Activated CD4-positive, alpha-beta T cell treated with anti-CD3 and anti-CD28 coated beads for 36 hours (primary cell): ENCODE measurements at regions of chrX and their contacts with region 1.

Region 1: DNA sequence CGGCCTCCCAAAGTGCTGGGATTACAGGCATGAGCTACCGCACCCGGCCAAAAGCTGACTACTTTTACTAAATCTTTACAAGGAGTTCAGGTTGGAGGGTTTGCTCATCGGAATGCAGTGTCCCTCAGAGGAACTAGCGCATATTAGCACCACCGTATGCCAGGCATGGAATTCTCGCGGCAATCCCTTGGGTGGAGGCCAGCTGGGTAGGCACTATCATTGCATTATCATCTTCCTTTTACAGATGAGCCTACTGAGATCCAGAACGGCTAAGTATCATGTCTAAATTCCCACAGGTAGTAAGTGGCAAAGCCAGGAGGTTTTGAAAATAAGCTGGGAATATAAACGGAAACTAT is 6.1 kb upstream of the CXorf66 start:
- DNase-seq: no peak
- ATAC-seq: no peak
- H3K4me3 Mint-ChIP-seq: no peak overlapping the region
- H3K27ac Mint-ChIP-seq: no peak overlapping the region
- H3K4me1 Mint-ChIP-seq: no peaks in the 10 kb centered on the region
- H3K27me3 Mint-ChIP-seq: peaks cover 5% of the 10 kb centered on the region

Region 2: DNA sequence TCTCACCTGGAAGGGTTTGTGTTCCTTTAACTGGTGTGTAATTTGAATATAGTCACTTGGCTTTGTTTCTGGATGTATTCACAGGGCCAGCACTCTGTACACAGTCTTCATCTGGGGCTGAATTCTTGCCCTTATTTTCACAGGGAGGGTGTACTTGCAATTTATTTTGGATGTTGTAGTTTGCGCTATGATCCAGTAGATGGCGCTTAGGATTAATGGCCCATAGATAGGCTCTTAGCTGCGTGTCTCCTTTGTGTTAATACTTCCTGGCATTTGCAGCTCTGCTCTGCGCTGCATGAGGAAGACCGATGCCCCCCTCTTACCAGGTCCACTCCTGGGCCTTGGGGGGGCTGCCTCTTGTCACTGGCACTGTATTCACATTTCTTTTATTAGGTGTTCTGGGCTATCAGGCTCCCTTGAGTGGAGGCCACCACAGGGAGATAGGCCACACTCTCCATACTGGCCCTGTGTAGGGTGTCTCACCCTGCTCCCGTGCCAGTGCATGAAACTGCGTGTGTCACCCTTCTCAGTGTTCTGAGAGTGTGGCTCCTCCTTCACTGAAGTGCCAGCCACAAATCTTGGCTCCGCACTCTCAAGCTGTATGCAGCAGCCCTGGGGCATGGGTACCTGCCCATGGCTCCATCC is 1843.2 kb before region 1 on chrX:
- CTCF ChIA-PET with region 1: no interaction called
- POLR2A ChIA-PET with region 1: no interaction called
- intact Hi-C with region 1: loop called in 1 of 2 experiments (anchors 10 kb)
- DNase-seq: peak; percentile 7
- ATAC-seq: no peak
- H3K4me3 Mint-ChIP-seq: no peak overlapping the region
- H3K27ac Mint-ChIP-seq: no peak overlapping the region
- H3K4me1 Mint-ChIP-seq: no peaks in the 10 kb centered on the region
- H3K27me3 Mint-ChIP-seq: no peaks in the 10 kb centered on the region

Region 3: GRCh38 chrX:138775517-138775916 is 1195.9 kb before region 1 on chrX:
- CTCF ChIA-PET with region 1: no interaction called
- POLR2A ChIA-PET with region 1: no interaction called
- intact Hi-C with region 1: loop called in 1 of 2 experiments (anchors 5 kb)
- DNase-seq: no peak
- ATAC-seq: no peak
- H3K4me3 Mint-ChIP-seq: no peak overlapping the region
- H3K27ac Mint-ChIP-seq: no peak overlapping the region
- H3K4me1 Mint-ChIP-seq: no peaks in the 10 kb centered on the region
- H3K27me3 Mint-ChIP-seq: no peaks in the 10 kb centered on the region

Region 4: DNA sequence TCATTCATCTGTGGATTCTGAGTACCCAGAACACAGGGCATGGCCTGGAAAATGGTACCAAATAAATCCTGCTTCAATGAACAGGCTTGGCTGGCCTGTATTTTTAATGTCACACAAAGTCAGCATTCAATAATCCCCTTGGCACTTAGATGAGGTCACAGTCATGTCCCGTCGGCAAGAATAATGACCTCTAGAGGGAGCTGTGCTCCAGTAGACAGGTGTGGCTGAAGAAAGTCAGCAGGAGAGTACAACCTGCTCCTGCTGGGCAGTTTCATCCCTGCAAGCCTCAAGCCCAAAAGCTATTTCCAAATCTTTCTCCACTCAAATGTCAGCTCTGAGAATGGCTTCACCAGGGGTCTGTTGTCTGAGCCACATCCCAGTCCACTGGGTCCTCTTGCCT is 844.9 kb before region 1 on chrX:
- CTCF ChIA-PET with region 1: no interaction called
- POLR2A ChIA-PET with region 1: no interaction called
- intact Hi-C with region 1: loop called in 1 of 2 experiments (anchors 10 kb)
- DNase-seq: peak; percentile 25
- ATAC-seq: no peak
- H3K4me3 Mint-ChIP-seq: no peak overlapping the region
- H3K27ac Mint-ChIP-seq: no peak overlapping the region
- H3K4me1 Mint-ChIP-seq: no peaks in the 10 kb centered on the region
- H3K27me3 Mint-ChIP-seq: no peaks in the 10 kb centered on the region

Region 5: DNA sequence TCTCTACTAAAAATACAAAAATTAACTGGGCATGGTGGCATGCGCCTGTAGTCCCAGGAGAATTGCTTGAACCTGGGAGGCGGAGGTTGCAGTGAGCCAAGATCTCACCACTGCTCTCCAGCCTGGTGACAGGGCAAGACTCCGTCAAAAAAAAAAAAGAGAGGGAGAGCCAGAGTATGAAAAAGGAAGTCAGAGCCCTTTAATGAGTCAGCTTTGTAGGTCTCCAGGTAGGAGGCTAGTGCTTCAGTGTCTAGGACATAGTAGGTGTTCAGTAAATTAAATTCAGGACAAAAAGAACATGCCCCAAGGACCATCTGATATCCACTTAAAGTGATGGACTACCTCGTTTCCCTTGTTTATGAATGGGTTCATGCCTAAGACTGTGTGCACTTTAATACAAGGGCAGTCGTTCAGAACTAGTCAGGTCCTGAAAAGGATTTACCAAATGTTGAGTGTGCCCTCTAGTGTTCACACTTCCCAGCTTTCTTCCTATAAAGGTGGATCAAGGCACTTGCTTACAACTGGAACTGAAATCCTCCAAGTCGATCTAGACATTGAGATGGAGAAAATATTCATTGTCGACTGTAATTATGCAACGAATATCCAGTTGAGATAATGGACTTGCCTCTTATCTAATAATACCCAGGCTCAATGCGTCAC is 411.9 kb before region 1 on chrX:
- CTCF ChIA-PET with region 1: no interaction called
- POLR2A ChIA-PET with region 1: no interaction called
- intact Hi-C with region 1: loop called in 1 of 2 experiments (anchors 10 kb)
- DNase-seq: peak; percentile 23
- ATAC-seq: no peak
- H3K4me3 Mint-ChIP-seq: no peak overlapping the region
- H3K27ac Mint-ChIP-seq: no peak overlapping the region
- H3K4me1 Mint-ChIP-seq: peaks cover 3% of the 10 kb centered on the region
- H3K27me3 Mint-ChIP-seq: no peaks in the 10 kb centered on the region

Region 6: GRCh38 chrX:139892512-139892911 is 78.9 kb before region 1 on chrX:
- CTCF ChIA-PET with region 1: no interaction called
- POLR2A ChIA-PET with region 1: no interaction called
- intact Hi-C with region 1: no loop called
- DNase-seq: no peak
- ATAC-seq: peak; percentile 53
- H3K4me3 Mint-ChIP-seq: no peak overlapping the region
- H3K27ac Mint-ChIP-seq: no peak overlapping the region
- H3K4me1 Mint-ChIP-seq: peaks cover 21% of the 10 kb centered on the region
- H3K27me3 Mint-ChIP-seq: no peaks in the 10 kb centered on the region